Activated T-helper 1 cell treated with anti-CD3 and anti-CD28 coated beads, Interleukin-12 subunit alpha, Interleukin-12 subunit beta, Interleukin-2, Interleukin-4 antibody, amounts not matched to agents 30 ng/mL and 10 ng/mL and 1 ng/mL, durations not matched to agents 14 hours and 24 hours and 36 hours (primary cell): ENCODE measurements at regions of chr12 and their contacts with region 1.

Region 1: GRCh38 chr12:53267999-53268647 is at the start of gene ESPL1:
- DNase-seq: peak; percentile 81
- H3K4me3 Mint-ChIP-seq: peak within 1 kb of the TSS; percentile 90
- H3K27ac Mint-ChIP-seq: peak within 1 kb of the TSS; percentile 88
- H3K4me1 Mint-ChIP-seq: peaks cover 43% of the 10 kb centered on the region
- H3K27me3 Mint-ChIP-seq: no peaks in the 10 kb centered on the region
- total RNA-seq, gene ESPL1: 61.2 and 68.4 TPM in 2 replicates

Region 2: DNA sequence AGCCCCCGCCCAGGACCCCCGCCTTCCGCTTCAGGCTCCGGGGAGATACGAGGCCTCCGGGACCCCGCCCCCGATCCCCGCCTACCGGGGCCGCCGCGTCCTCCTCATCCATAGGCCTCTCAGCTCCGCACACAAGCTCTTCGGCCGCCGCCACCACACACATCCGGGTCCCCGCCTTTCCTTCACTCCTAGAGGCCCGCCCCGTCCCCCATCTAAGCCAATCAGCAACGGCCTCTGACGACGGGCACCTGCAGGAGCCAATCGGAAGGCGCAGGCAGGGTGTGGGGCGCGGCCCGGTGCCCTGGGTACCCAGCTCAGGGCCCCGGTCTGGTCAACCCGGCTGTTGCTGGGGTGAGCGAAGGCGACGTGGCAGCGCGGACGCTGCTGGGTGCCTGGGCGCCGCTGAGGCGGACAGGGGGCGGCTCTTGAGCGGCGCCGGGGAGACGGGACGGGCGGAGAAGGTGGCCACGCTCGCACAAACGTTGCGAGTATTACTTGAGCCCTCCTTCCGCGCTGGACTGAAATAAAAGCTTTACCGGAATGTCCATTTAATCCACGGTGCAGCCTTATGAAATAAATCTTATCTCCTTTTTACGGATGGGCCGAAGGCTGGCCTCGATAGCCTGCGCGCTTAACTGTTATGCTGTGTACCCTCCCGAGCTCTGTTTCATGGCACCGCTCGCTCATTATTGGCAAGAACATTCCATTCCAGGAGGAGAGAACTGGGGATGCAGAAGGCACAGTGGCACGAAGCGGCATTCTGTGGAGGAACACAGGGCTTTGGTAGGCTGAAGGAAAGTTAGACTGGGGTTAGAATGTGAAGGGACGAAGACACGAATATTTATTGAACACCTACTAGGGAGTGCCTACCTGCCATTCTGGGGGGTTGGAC is 188.7 kb before region 1 on chr12 and contains the start of gene SPRYD3:
- intact Hi-C with region 1: loop called (anchors 1 kb)
- DNase-seq: peak; percentile 97
- H3K4me3 Mint-ChIP-seq: peak within 1 kb of the TSS; percentile 93
- H3K27ac Mint-ChIP-seq: peak within 1 kb of the TSS; percentile 92
- H3K4me1 Mint-ChIP-seq: peaks cover 36% of the 10 kb centered on the region
- H3K27me3 Mint-ChIP-seq: no peaks in the 10 kb centered on the region
- total RNA-seq, gene SPRYD3: 41.2 and 42.6 TPM in 2 replicates

Region 3: DNA sequence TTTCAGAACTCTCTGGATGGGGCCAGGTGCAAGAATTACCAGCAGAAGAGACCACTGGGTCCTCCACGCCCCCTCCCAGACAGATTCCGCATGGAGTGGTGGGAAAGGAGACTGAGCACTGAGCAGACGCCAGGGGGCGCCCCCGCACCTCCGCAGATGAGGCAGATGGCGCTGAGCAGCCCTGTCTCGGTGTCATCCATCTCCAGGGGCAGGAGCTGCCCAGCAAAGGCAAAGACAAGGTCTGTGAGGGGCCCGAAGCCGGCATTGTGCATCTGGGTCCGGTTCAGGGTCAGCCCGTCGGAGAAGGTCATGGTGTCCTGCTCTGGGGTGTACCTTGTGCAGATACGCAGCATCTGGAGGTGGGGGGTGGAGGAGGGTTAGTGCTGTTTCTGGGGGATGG is 54.8 kb before region 1 on chr12:
- intact Hi-C with region 1: loop called (anchors 1 kb)
- DNase-seq: peak; percentile 75
- H3K4me3 Mint-ChIP-seq: no peak overlapping the region
- H3K27ac Mint-ChIP-seq: peak overlapping the region; percentile 11
- H3K4me1 Mint-ChIP-seq: peaks cover 78% of the 10 kb centered on the region
- H3K27me3 Mint-ChIP-seq: no peaks in the 10 kb centered on the region

Region 4: DNA sequence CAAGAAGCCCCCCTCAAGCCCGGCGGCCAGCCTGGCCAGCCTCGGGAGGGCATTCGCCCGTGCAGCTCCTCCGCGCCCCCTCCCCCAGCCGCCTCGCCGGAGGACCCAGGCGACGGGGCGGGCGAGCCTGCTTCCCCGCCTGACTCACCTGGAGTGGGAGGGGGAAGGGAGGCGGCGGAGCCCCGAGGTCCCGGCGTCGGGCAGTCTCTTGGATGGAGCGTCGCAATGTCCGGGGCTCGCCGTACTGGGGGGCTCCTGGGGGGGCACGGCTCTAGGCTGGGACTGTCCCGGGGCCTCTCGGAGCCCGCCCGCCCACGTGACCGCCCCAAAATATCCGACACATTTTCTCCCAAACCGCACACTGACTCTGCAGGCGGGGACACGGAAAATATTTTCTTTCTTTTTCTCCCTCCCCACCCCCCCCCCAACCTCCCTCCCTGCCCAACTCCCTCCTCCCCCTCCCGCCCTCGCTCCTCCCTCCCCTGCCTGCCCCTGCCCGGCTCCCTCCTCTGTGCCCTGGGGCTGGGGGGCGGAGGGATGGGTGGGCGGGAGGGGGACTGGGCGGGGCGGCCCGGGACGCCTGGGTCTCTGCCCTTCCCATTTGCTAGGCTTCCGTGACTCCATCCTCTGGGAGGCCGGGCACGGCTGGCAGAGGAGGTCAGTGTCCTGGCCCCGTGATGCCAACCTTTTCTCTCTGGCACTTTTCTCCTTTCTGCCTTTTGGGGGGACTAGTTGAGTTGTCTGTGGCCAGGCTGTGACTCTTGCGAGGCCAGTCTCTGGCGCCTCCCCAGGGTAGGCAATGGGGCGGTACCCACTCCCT is 36.1 kb before region 1 on chr12 and contains the start of gene RARG:
- intact Hi-C with region 1: loop called (anchors 1 kb)
- DNase-seq: peak; percentile 42
- H3K4me3 Mint-ChIP-seq: peak within 1 kb of the TSS; percentile 88
- H3K27ac Mint-ChIP-seq: peak within 1 kb of the TSS; percentile 88
- H3K4me1 Mint-ChIP-seq: peaks cover 78% of the 10 kb centered on the region
- H3K27me3 Mint-ChIP-seq: no peaks in the 10 kb centered on the region
- total RNA-seq, gene RARG: 58.6 and 61.6 TPM in 2 replicates

Region 5: GRCh38 chr12:53287741-53288216 is 19.7 kb after region 1 on chr12:
- intact Hi-C with region 1: loop called (anchors 2 kb)
- DNase-seq: peak; percentile 51
- H3K4me3 Mint-ChIP-seq: no peak overlapping the region
- H3K27ac Mint-ChIP-seq: peak overlapping the region; percentile 60
- H3K4me1 Mint-ChIP-seq: peaks cover 7% of the 10 kb centered on the region
- H3K27me3 Mint-ChIP-seq: no peaks in the 10 kb centered on the region

Region 6: GRCh38 chr12:53441040-53441833 is 173.1 kb after region 1 on chr12 and contains the start of gene PRR13:
- intact Hi-C with region 1: loop called (anchors 1 kb)
- DNase-seq: peak; percentile 96
- H3K4me3 Mint-ChIP-seq: peak within 1 kb of the TSS; percentile 89
- H3K27ac Mint-ChIP-seq: peak within 1 kb of the TSS; percentile 86
- H3K4me1 Mint-ChIP-seq: peaks cover 35% of the 10 kb centered on the region
- H3K27me3 Mint-ChIP-seq: no peaks in the 10 kb centered on the region
- total RNA-seq, gene PRR13: 206 and 219 TPM in 2 replicates